ENCODE measurements at regions of chr11 and their contacts with region 1.

Region 1: GRCh38 chr11:36478700-36479329 is 31.3 kb downstream of the TRAF6 start:
- DNase-seq: peak; percentile 65
- ATAC-seq: no peak
- H3K4me3 ChIP-seq: no peak overlapping the region
- H3K4me3 Mint-ChIP-seq: no peak overlapping the region
- H3K27ac ChIP-seq: no peak overlapping the region
- H3K27ac Mint-ChIP-seq: no peak overlapping the region
- H3K4me1 ChIP-seq: no peaks in the 10 kb centered on the region
- H3K4me1 Mint-ChIP-seq: no peaks in the 10 kb centered on the region
- H3K27me3 ChIP-seq: no peaks in the 10 kb centered on the region
- H3K27me3 Mint-ChIP-seq: no peaks in the 10 kb centered on the region
- CTCF ChIP-seq: peak; percentile 63

Region 2: DNA sequence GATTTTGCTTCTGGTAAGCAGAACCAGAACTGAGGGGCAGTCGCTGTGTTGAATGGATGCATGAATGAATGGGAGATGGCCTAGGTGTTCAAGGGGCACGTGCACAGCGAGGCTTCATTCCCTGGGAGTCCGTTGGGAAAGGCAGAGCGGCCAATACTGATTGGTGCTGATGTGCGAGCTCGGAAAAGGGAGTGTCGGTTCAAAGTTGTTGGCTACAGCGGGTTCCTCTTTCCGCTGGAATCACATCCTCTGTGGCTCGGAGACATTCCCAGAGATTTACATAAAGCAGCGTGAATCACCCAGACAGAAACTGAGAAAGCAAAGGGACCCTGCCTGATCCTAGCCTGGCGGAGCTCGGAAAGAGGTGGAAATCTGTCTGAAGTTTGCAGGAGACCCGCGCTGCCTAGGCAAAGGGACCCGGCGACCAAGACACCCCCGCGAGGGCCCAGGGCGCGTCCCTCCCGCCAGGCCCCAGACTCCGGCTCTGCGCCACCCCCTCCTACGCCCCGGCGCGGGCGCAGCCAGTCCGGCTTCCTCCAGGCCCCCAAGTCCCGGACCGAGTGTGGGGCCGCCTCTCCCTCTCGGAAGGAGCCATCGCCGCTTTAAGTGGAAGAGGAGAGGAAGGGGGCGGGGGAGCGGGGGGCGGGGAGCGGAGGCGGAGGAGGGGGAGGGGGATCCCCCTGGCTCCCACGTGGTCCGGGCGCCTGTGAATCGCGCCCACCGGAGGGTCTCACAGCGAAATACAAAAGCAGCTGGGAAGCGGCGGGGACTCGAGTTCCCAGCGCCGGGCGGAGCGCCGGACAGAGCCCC is 860.9 kb before region 1 on chr11 and contains the start of gene FJX1:
- CTCF ChIA-PET with region 1: interaction called, 9 read pairs
- POLR2A ChIA-PET with region 1: no interaction called
- intact Hi-C with region 1: loop called (anchors 5 kb)
- DNase-seq: peak; percentile 29
- ATAC-seq: peak; percentile 38
- H3K4me3 ChIP-seq: peak within 1 kb of the TSS; percentile 7 to 55 (median 42)
- H3K4me3 Mint-ChIP-seq: peak within 1 kb of the TSS; percentile 83
- H3K27ac ChIP-seq: no peak within 1 kb of the TSS
- H3K27ac Mint-ChIP-seq: no peak within 1 kb of the TSS
- H3K4me1 ChIP-seq: peaks cover 17 to 21% of the 10 kb centered on the region in 2 donors
- H3K4me1 Mint-ChIP-seq: peaks cover 16% of the 10 kb centered on the region
- H3K27me3 ChIP-seq: peaks cover 0 to 52% (median 32%) of the 10 kb centered on the region in 4 experiments
- H3K27me3 Mint-ChIP-seq: peaks cover 44% of the 10 kb centered on the region
- CTCF ChIP-seq: no peak
- total RNA-seq, gene FJX1: 0.36 TPM in 1 of 2 replicates, not detected in the other

Region 3: GRCh38 chr11:35822815-35823495 is 655.9 kb before region 1 on chr11:
- CTCF ChIA-PET with region 1: interaction called, 11 read pairs
- POLR2A ChIA-PET with region 1: no interaction called
- intact Hi-C with region 1: no loop called
- DNase-seq: no peak
- ATAC-seq: no peak
- H3K4me3 ChIP-seq: no peak overlapping the region
- H3K4me3 Mint-ChIP-seq: no peak overlapping the region
- H3K27ac ChIP-seq: no peak overlapping the region
- H3K27ac Mint-ChIP-seq: no peak overlapping the region
- H3K4me1 ChIP-seq: peaks cover 3 to 9% of the 10 kb centered on the region in 2 donors
- H3K4me1 Mint-ChIP-seq: peaks cover 12% of the 10 kb centered on the region
- H3K27me3 ChIP-seq: no peaks in the 10 kb centered on the region
- H3K27me3 Mint-ChIP-seq: peaks cover 4% of the 10 kb centered on the region
- CTCF ChIP-seq: no peak

Region 4: GRCh38 chr11:36041988-36042611 is 436.7 kb before region 1 on chr11:
- CTCF ChIA-PET with region 1: interaction called, 5 read pairs
- POLR2A ChIA-PET with region 1: no interaction called
- intact Hi-C with region 1: loop called (anchors 5 kb)
- DNase-seq: no peak
- ATAC-seq: no peak
- H3K4me3 ChIP-seq: no peak overlapping the region
- H3K4me3 Mint-ChIP-seq: no peak overlapping the region
- H3K27ac ChIP-seq: no peak overlapping the region
- H3K27ac Mint-ChIP-seq: no peak overlapping the region
- H3K4me1 ChIP-seq: no peaks in the 10 kb centered on the region
- H3K4me1 Mint-ChIP-seq: no peaks in the 10 kb centered on the region
- H3K27me3 ChIP-seq: peaks cover 0 to 3% (median 0%) of the 10 kb centered on the region in 4 experiments
- H3K27me3 Mint-ChIP-seq: peaks cover 15% of the 10 kb centered on the region
- CTCF ChIP-seq: peak; percentile 24

Region 5: GRCh38 chr11:36300651-36301050 is 178.2 kb before region 1 on chr11:
- CTCF ChIA-PET with region 1: interaction called, 167 read pairs
- POLR2A ChIA-PET with region 1: no interaction called
- intact Hi-C with region 1: no loop called
- DNase-seq: no peak
- ATAC-seq: no peak
- H3K4me3 ChIP-seq: no peak overlapping the region
- H3K4me3 Mint-ChIP-seq: no peak overlapping the region
- H3K27ac ChIP-seq: no peak overlapping the region
- H3K27ac Mint-ChIP-seq: no peak overlapping the region
- H3K4me1 ChIP-seq: no peaks in the 10 kb centered on the region
- H3K4me1 Mint-ChIP-seq: no peaks in the 10 kb centered on the region
- H3K27me3 ChIP-seq: peaks cover 0 to 5% (median 0%) of the 10 kb centered on the region in 4 experiments
- H3K27me3 Mint-ChIP-seq: peaks cover 25% of the 10 kb centered on the region
- CTCF ChIP-seq: no peak

Region 6: GRCh38 chr11:36306888-36307287 is 171.9 kb before region 1 on chr11:
- CTCF ChIA-PET with region 1: interaction called, 20 read pairs
- POLR2A ChIA-PET with region 1: no interaction called
- intact Hi-C with region 1: loop called (anchors 1 kb)
- DNase-seq: peak; percentile 25
- ATAC-seq: no peak
- H3K4me3 ChIP-seq: no peak overlapping the region
- H3K4me3 Mint-ChIP-seq: no peak overlapping the region
- H3K27ac ChIP-seq: no peak overlapping the region
- H3K27ac Mint-ChIP-seq: no peak overlapping the region
- H3K4me1 ChIP-seq: no peaks in the 10 kb centered on the region
- H3K4me1 Mint-ChIP-seq: no peaks in the 10 kb centered on the region
- H3K27me3 ChIP-seq: no peaks in the 10 kb centered on the region
- H3K27me3 Mint-ChIP-seq: peaks cover 25% of the 10 kb centered on the region
- CTCF ChIP-seq: peak; percentile 60

Region 7: GRCh38 chr11:36376888-36377758 is 101.7 kb before region 1 on chr11:
- CTCF ChIA-PET with region 1: interaction called, 25 read pairs
- POLR2A ChIA-PET with region 1: no interaction called
- intact Hi-C with region 1: no loop called
- DNase-seq: peak; percentile 63
- ATAC-seq: peak; percentile 58
- H3K4me3 ChIP-seq: peak overlapping the region; percentile 53 to 81 (median 70)
- H3K4me3 Mint-ChIP-seq: peak overlapping the region; percentile 92
- H3K27ac ChIP-seq: no peak overlapping the region
- H3K27ac Mint-ChIP-seq: no peak overlapping the region
- H3K4me1 ChIP-seq: peaks cover 26 to 35% of the 10 kb centered on the region in 2 donors
- H3K4me1 Mint-ChIP-seq: peaks cover 33% of the 10 kb centered on the region
- H3K27me3 ChIP-seq: peaks cover 0 to 34% (median 18%) of the 10 kb centered on the region in 4 experiments
- H3K27me3 Mint-ChIP-seq: peaks cover 53% of the 10 kb centered on the region
- CTCF ChIP-seq: peak; percentile 71

Region 8: DNA sequence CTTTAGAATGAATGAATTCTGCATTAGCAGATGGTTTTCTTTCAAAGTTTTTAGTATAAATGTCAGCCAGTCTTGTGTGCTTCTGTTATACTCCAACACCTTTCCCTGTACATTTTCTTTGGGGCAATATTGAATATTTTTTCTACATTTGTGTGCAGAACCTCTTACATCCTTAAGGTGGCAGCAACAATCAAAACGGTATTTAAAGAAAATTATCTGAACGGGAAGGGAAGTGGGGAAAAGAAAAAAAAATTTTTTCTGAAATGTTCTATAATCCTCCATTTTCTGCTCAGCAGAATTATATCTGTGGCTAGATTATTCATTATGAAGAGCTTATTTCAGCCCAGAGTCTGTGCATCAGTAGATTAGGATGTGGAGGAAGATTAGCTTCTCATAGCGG is 466.6 kb after region 1 on chr11:
- CTCF ChIA-PET with region 1: no interaction called
- POLR2A ChIA-PET with region 1: no interaction called
- intact Hi-C with region 1: no loop called
- DNase-seq: no peak
- ATAC-seq: no peak
- H3K4me3 ChIP-seq: no peak overlapping the region
- H3K4me3 Mint-ChIP-seq: no peak overlapping the region
- H3K27ac ChIP-seq: no peak overlapping the region
- H3K27ac Mint-ChIP-seq: no peak overlapping the region
- H3K4me1 ChIP-seq: no peaks in the 10 kb centered on the region
- H3K4me1 Mint-ChIP-seq: no peaks in the 10 kb centered on the region
- H3K27me3 ChIP-seq: no peaks in the 10 kb centered on the region
- H3K27me3 Mint-ChIP-seq: no peaks in the 10 kb centered on the region
- CTCF ChIP-seq: peak; percentile 21

Measured in B cell (primary cell).